ENCODE measurements at regions of chr1 and their contacts with region 1.

Region 1: GRCh38 chr1:226634166-226634588 is 85.6 kb downstream of the STUM start:
- DNase-seq: peak; percentile 67 to 83
- H3K4me3 ChIP-seq: no peak overlapping the region
- H3K4me3 Mint-ChIP-seq: no peak overlapping the region
- H3K27ac Mint-ChIP-seq: no peak overlapping the region
- H3K4me1 ChIP-seq: no peaks in the 10 kb centered on the region
- H3K4me1 Mint-ChIP-seq: no peaks in the 10 kb centered on the region
- H3K27me3 ChIP-seq: no peaks in the 10 kb centered on the region
- H3K27me3 Mint-ChIP-seq: no peaks in the 10 kb centered on the region
- CTCF ChIP-seq: peak; percentile 92 to 95

Region 2: DNA sequence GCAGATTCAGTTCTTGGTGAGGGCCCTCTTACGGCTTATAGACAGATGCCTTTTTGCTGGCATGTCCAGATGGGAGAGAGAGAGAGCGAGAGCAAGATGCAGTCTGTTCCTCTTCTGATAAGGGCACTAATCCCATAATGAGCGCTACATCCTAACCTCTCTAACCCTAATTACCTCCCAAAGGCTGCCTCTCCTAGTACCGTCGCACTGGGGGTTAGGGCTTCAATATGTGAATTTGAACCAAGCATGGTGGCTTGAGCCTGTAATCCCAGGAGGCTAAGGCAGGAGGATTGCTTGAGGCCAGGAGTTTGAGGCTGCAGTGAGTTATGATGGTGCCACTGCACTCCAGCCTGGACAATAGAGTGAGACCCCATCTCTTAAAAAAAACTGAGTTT is 624.5 kb before region 1 on chr1:
- CTCF ChIA-PET with region 1: no interaction called
- POLR2A ChIA-PET with region 1: no interaction called
- intact Hi-C with region 1: no loop called
- DNase-seq: no peak
- H3K4me3 ChIP-seq: no peak overlapping the region
- H3K4me3 Mint-ChIP-seq: no peak overlapping the region
- H3K27ac Mint-ChIP-seq: no peak overlapping the region
- H3K4me1 ChIP-seq: peaks cover 8% of the 10 kb centered on the region; the same call in 1 of the 2 replicates
- H3K4me1 Mint-ChIP-seq: peaks cover 11% of the 10 kb centered on the region
- H3K27me3 ChIP-seq: no peaks in the 10 kb centered on the region
- H3K27me3 Mint-ChIP-seq: peaks cover 2% of the 10 kb centered on the region
- CTCF ChIP-seq: no peak

Region 3: DNA sequence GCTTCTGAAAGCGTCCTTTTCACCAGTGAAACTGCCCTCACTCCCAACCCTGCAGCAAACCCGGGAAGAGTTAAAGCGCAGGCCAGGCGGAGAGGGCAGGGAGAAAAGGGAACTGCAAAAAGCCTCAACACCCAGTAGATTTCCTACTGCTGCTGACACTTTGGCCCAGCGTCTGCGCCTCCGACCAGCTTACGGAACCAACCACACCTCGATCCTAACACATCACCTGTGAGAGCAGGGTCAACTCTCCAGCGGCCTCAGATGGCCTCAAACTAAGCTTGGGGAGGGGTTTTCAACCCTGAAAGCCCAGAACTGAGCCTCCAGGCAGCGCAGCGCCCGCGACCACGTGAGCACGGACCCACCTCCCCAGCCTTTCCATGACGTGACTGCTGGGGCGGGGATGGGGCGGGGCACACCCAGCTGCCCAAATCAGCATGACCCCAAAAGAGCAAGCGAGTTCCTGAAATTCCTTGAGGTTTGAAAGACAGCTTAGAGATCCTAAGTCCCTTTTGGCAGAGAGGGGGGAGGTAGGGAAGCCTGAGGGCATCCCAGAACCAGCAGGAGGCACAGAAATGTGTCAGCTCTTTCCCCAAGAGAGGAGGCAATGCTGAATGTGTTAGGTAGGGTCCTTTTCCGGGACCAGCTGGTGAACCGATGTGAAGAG is 45.8 kb after region 1 on chr1:
- CTCF ChIA-PET with region 1: interaction called, 3 read pairs
- POLR2A ChIA-PET with region 1: no interaction called
- intact Hi-C with region 1: loop called (anchors 2 kb)
- DNase-seq: peak; percentile 87 to 92
- H3K4me3 ChIP-seq: peak overlapping the region; percentile 21
- H3K4me3 Mint-ChIP-seq: peak overlapping the region; percentile 75
- H3K27ac Mint-ChIP-seq: peak overlapping the region; percentile 98
- H3K4me1 ChIP-seq: peaks cover 21% of the 10 kb centered on the region
- H3K4me1 Mint-ChIP-seq: peaks cover 20% of the 10 kb centered on the region
- H3K27me3 ChIP-seq: no peaks in the 10 kb centered on the region
- H3K27me3 Mint-ChIP-seq: no peaks in the 10 kb centered on the region
- CTCF ChIP-seq: no peak

Region 4: GRCh38 chr1:226687426-226687825 is 53.2 kb after region 1 on chr1:
- CTCF ChIA-PET with region 1: no interaction called
- POLR2A ChIA-PET with region 1: no interaction called
- intact Hi-C with region 1: loop called (anchors 1 kb)
- DNase-seq: no peak
- H3K4me3 ChIP-seq: no peak overlapping the region
- H3K4me3 Mint-ChIP-seq: no peak overlapping the region
- H3K27ac Mint-ChIP-seq: no peak overlapping the region
- H3K4me1 ChIP-seq: no peaks in the 10 kb centered on the region
- H3K4me1 Mint-ChIP-seq: peaks cover 6% of the 10 kb centered on the region
- H3K27me3 ChIP-seq: no peaks in the 10 kb centered on the region; the same call in 1 of the 2 replicates
- H3K27me3 Mint-ChIP-seq: no peaks in the 10 kb centered on the region
- CTCF ChIP-seq: no peak

Region 5: GRCh38 chr1:226798427-226799411 is 164.5 kb after region 1 on chr1:
- CTCF ChIA-PET with region 1: no interaction called
- POLR2A ChIA-PET with region 1: no interaction called
- intact Hi-C with region 1: no loop called
- DNase-seq: no peak
- H3K4me3 ChIP-seq: no peak overlapping the region
- H3K4me3 Mint-ChIP-seq: no peak overlapping the region
- H3K27ac Mint-ChIP-seq: no peak overlapping the region
- H3K4me1 ChIP-seq: no peaks in the 10 kb centered on the region
- H3K4me1 Mint-ChIP-seq: no peaks in the 10 kb centered on the region
- H3K27me3 ChIP-seq: no peaks in the 10 kb centered on the region
- H3K27me3 Mint-ChIP-seq: peaks cover 4% of the 10 kb centered on the region
- CTCF ChIP-seq: no peak

Region 6: GRCh38 chr1:226827968-226828513 is 193.9 kb after region 1 on chr1:
- CTCF ChIA-PET with region 1: interaction called, 3 read pairs
- POLR2A ChIA-PET with region 1: no interaction called
- intact Hi-C with region 1: loop called (anchors 1 kb)
- DNase-seq: peak; percentile 90
- H3K4me3 ChIP-seq: no peak overlapping the region
- H3K4me3 Mint-ChIP-seq: no peak overlapping the region
- H3K27ac Mint-ChIP-seq: no peak overlapping the region
- H3K4me1 ChIP-seq: no peaks in the 10 kb centered on the region
- H3K4me1 Mint-ChIP-seq: no peaks in the 10 kb centered on the region
- H3K27me3 ChIP-seq: no peaks in the 10 kb centered on the region
- H3K27me3 Mint-ChIP-seq: no peaks in the 10 kb centered on the region
- CTCF ChIP-seq: peak; percentile 78 to 81

Region 7: GRCh38 chr1:226990133-226990716 is 356.0 kb after region 1 on chr1:
- CTCF ChIA-PET with region 1: no interaction called
- POLR2A ChIA-PET with region 1: no interaction called
- intact Hi-C with region 1: no loop called
- DNase-seq: no peak
- H3K4me3 ChIP-seq: no peak overlapping the region
- H3K4me3 Mint-ChIP-seq: no peak overlapping the region
- H3K27ac Mint-ChIP-seq: peak overlapping the region; percentile 18
- H3K4me1 ChIP-seq: peaks cover 8% of the 10 kb centered on the region
- H3K4me1 Mint-ChIP-seq: peaks cover 13% of the 10 kb centered on the region
- H3K27me3 ChIP-seq: no peaks in the 10 kb centered on the region
- H3K27me3 Mint-ChIP-seq: no peaks in the 10 kb centered on the region
- CTCF ChIP-seq: no peak

Measured in Caco-2 (cell line).